Body of pancreas (tissue), 4 donors: ENCODE measurements at regions of chr18 and their contacts with region 1.

Region 1: GRCh38 chr18:21109936-21110663 is 1.5 kb downstream of the ROCK1 start:
- DNase-seq: no peak
- ATAC-seq: no peak
- H3K4me3 ChIP-seq: peak overlapping the region; percentile 68 to 97
- H3K27ac ChIP-seq: peak overlapping the region in 2 of 4 donors; percentile 97 to 98
- H3K4me1 ChIP-seq: peaks cover 40% of the 10 kb centered on the region
- H3K27me3 ChIP-seq: no peaks in the 10 kb centered on the region
- CTCF ChIP-seq: no peak
- POLR2A ChIP-seq: no peak

Region 2: DNA sequence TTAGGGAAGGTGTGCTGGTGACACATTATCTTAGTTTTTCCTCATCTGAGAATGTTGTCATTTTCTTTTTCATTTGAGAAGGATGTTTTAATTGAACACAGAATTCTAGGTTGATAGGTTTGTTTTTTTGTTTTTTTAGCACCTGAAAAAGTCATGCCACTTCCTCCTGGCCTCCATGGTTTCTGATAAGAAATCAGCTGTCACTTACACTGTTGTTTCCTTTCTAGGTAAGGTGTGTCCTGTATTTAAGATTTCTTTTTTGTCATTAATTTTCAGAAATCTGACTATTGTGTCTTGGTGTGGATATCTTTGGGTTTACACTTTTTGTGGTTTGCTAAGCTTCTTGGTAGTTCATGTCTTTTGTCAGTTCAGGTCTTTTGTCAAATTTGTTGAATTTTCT is 97.8 kb before region 1 on chr18:
- intact Hi-C with region 1: loop called (anchors 10 kb)
- DNase-seq: no peak
- ATAC-seq: no peak
- H3K4me3 ChIP-seq: no peak overlapping the region
- H3K27ac ChIP-seq: no peak overlapping the region
- H3K4me1 ChIP-seq: no peaks in the 10 kb centered on the region
- H3K27me3 ChIP-seq: no peaks in the 10 kb centered on the region
- CTCF ChIP-seq: no peak
- POLR2A ChIP-seq: no peak

Region 3: GRCh38 chr18:21391074-21391673 is 281.1 kb after region 1 on chr18:
- intact Hi-C with region 1: no loop called
- DNase-seq: no peak
- ATAC-seq: no peak
- H3K4me3 ChIP-seq: no peak overlapping the region
- H3K27ac ChIP-seq: no peak overlapping the region
- H3K4me1 ChIP-seq: no peaks in the 10 kb centered on the region
- H3K27me3 ChIP-seq: no peaks in the 10 kb centered on the region
- CTCF ChIP-seq: no peak
- POLR2A ChIP-seq: no peak